MCF 10A (cell line): ENCODE measurements at regions of chr9 and their contacts with region 1.

Region 1: GRCh38 chr9:123349691-123350480 is 6.1 kb upstream of the CRB2 start:
- DNase-seq: peak; percentile 65
- H3K4me3 Mint-ChIP-seq: no peak overlapping the region
- H3K27ac Mint-ChIP-seq: no peak overlapping the region
- H3K4me1 Mint-ChIP-seq: peaks cover 9% of the 10 kb centered on the region
- H3K27me3 Mint-ChIP-seq: peaks cover 43% of the 10 kb centered on the region
- CTCF ChIP-seq: peak; percentile 95

Region 2: DNA sequence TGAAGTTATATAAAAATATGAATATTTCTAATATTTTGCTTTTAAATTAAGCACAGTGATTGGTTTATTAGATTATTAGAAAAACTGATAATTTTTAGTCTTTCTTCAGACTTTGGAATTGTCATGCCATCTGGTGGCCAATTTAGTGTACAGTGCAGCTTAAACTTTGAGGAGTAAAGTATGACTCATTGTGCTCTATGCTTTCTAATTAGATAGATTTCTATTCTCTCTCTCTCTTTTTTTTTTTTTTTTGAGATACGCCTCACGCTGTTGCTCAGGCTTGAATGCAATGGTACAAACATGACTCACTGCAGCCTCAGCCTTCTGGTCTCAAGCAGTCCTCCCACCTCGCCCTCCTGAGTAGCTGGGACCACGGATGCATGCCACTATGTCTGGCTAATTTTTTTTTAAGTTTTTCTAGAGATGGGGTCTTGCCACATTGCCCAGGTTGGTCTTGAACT is 358.5 kb before region 1 on chr9:
- CTCF ChIA-PET with region 1: interaction called, 5 read pairs
- POLR2A ChIA-PET with region 1: no interaction called
- intact Hi-C with region 1: loop called (anchors 5 kb)
- DNase-seq: peak; percentile 79
- H3K4me3 Mint-ChIP-seq: no peak overlapping the region
- H3K27ac Mint-ChIP-seq: no peak overlapping the region
- H3K4me1 Mint-ChIP-seq: no peaks in the 10 kb centered on the region
- H3K27me3 Mint-ChIP-seq: no peaks in the 10 kb centered on the region
- CTCF ChIP-seq: peak; percentile 68

Region 3: DNA sequence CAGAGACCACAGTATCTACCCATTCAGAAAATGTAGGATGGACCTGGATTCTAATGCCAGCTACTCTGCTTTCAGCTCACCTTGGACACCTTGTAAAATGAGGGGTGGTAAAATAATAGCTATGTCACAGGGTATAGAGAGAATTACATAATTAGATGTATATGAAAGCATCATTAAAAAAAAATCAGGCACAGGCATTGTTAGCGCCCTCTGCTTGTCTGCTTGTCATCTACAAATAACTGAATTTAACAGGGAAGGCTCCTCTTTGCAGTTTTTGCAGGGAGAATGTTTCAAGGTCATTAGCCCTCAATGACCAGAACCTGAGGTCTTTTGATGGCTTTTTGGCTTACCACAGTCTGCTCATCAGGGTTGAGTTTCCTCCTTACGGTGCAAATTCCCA is 258.4 kb before region 1 on chr9:
- CTCF ChIA-PET with region 1: interaction called, 29 read pairs
- POLR2A ChIA-PET with region 1: no interaction called
- intact Hi-C with region 1: no loop called
- DNase-seq: no peak
- H3K4me3 Mint-ChIP-seq: no peak overlapping the region
- H3K27ac Mint-ChIP-seq: no peak overlapping the region
- H3K4me1 Mint-ChIP-seq: no peaks in the 10 kb centered on the region
- H3K27me3 Mint-ChIP-seq: no peaks in the 10 kb centered on the region
- CTCF ChIP-seq: no peak

Region 4: DNA sequence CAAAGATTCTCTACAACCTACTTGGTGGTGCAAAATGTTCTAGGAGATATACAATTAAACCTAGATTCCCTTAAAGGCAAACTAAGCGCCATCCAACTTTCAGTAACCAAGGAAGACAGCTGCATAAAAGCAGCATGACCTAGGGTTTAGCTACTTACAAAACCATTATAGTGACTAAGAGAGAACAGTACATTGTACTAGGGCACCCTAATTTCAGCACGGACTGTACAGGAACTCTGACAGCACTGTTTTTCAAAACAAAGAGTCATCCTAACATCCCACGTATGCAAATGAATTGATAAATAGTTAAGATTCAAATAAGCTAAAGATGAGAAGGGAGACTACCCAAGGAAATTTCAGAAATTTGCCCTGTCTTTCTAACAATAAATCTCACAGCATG is 111.5 kb before region 1 on chr9:
- CTCF ChIA-PET with region 1: interaction called, 10 read pairs
- POLR2A ChIA-PET with region 1: no interaction called
- intact Hi-C with region 1: no loop called
- DNase-seq: no peak
- H3K4me3 Mint-ChIP-seq: no peak overlapping the region
- H3K27ac Mint-ChIP-seq: no peak overlapping the region
- H3K4me1 Mint-ChIP-seq: peaks cover 10% of the 10 kb centered on the region
- H3K27me3 Mint-ChIP-seq: no peaks in the 10 kb centered on the region
- CTCF ChIP-seq: no peak

Region 5: DNA sequence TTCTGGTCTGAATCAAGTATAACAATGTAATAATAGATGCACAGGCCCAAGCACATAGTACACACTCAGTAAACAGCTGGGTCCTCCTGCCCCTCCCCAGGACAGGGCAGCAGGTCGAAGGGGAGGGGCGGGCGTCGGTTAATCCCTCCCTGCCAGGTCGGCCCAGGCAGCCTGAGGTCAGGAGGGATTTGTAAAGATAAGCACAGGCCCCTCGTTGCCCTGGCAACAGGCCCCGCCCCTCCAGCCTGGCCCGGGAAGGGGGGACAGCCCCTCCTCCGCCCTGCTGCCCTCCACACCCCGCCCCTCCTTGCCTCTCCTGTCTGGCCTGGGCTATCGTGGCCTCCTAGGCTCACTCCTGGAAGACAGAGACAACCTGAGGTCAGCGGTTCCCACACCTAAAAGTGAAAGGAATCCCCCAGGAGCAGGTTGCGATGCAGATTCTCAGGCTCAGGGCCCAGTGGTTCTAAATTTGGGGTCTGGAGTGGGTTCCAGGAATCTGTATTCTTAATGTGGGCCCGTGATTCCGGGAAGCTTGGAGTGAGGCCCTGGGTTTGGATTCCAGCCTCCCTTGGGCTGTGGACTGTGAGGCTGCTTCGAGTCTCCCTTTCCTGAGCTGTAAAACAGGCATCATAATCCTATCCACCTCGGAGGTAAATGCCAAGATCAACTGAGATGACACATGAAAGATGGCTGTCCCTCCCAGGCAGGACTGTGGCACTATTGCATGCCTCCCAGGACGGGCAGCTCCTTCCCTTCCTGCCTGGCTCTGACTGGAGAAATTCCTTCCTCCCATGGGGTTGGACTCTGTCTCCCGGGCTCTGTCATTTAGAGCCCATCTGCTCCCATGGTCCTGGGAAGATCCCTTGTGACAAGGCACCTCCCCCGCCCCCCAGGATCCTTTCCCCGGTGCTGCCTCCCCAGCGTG is 10.5 kb after region 1 on chr9:
- CTCF ChIA-PET with region 1: interaction called, 33 read pairs
- POLR2A ChIA-PET with region 1: no interaction called
- intact Hi-C with region 1: no loop called
- DNase-seq: no peak
- H3K4me3 Mint-ChIP-seq: no peak overlapping the region
- H3K27ac Mint-ChIP-seq: no peak overlapping the region
- H3K4me1 Mint-ChIP-seq: no peaks in the 10 kb centered on the region
- H3K27me3 Mint-ChIP-seq: peaks cover 3% of the 10 kb centered on the region
- CTCF ChIP-seq: no peak

Region 6: DNA sequence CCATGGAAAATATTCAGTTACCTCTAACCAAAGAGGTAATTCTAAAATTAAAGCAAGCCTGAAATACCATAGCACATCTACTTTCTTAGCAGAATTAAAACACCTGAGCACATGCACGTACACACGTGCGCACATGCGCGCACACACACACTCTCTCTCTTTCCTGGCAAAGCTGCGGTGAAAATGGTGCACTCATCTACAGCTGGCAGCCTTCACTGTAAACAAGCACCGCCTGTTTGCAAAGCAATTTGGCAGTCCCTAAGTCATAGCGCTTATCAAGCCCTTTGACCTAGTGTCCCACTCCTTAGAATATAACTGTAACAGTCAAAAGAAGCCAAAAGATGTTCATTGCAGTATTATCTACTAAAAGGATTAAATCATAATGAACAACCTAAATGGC is 301.4 kb after region 1 on chr9:
- CTCF ChIA-PET with region 1: no interaction called
- POLR2A ChIA-PET with region 1: no interaction called
- intact Hi-C with region 1: no loop called
- DNase-seq: no peak
- H3K4me3 Mint-ChIP-seq: no peak overlapping the region
- H3K27ac Mint-ChIP-seq: no peak overlapping the region
- H3K4me1 Mint-ChIP-seq: no peaks in the 10 kb centered on the region
- H3K27me3 Mint-ChIP-seq: no peaks in the 10 kb centered on the region
- CTCF ChIP-seq: no peak